Dorsolateral prefrontal cortex (tissue), 120 donors: ENCODE measurements at regions of chr19 and their contacts with region 1.

Region 1: DNA sequence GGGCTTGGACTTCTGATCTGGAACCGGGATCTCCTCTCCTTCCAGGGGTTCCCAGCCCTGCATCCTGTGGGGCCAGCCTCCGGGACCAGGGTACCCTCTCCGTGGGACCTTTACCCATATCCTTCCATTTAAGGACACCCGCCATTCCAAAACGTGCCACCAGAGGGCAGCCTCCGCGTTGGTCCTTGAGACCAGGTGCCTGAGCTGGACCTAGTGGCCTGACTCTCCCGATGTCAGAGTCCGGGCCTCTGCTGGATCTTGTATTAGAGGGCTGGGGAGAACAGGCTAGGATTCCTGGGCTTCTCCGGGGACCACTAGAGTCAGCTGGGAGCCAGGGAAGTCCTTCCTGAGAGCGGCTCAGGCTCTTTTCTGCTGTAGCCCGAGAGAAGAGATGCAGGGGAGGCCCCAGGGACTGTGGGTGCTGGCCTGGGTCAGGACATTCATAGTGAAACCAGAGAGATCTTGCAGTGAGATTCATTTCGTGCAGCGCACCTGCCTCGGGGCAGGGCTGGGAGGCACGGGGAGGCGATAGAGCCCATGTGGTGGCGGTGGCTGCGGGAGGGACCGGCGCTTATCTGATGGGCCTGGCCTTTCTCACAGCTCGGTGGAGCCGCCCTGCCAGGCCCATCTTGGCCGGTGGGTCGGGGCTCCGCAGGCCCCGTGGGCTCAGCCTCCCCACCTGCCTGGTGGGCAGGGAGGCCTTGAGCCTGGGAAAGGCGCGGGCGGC is 9.8 kb upstream of the SLC7A10 start:
- DNase-seq: peak; percentile 65 to 86 (median 79)
- H3K4me3 ChIP-seq: no peak overlapping the region
- H3K27ac ChIP-seq: no peak overlapping the region
- H3K27me3 ChIP-seq: peaks cover 0 to 6% (median 0%) of the 10 kb centered on the region in 45 donors
- CTCF ChIP-seq: peak; percentile 48 to 97 (median 84)

Region 2: DNA sequence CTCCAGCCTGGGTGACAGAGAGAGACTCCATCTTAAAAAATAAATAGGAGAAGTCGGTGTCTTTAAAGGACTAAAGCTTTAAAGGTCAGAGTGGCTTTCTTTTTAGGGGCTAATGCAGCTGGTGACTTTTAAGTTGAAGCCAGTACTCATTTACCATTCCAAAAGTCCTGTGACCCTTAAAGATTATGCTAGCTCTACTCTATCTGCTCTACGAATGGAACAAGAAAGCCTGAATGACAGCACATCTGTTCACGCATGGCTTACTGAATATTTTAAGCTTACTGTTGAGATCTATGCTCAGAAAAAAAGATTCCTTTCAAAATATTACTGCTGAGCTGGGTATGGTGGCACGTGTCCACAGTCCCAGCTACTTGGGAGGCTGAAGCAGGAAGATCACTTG is 499.5 kb before region 1 on chr19:
- intact Hi-C with region 1: no loop called
- DNase-seq: no peak
- H3K4me3 ChIP-seq: no peak overlapping the region
- H3K27ac ChIP-seq: no peak overlapping the region
- H3K27me3 ChIP-seq: no peaks in the 10 kb centered on the region
- CTCF ChIP-seq: no peak

Region 3: GRCh38 chr19:33143897-33144405 is 91.5 kb before region 1 on chr19:
- intact Hi-C with region 1: loop called in 1 of 2 experiments (anchors 10 kb)
- DNase-seq: peak; percentile 34 to 75 (median 54)
- H3K4me3 ChIP-seq: peak overlapping the region in 20 of 59 donors; percentile 4 to 53 (median 20)
- H3K27ac ChIP-seq: no peak overlapping the region
- H3K27me3 ChIP-seq: peaks cover 0 to 2% (median 0%) of the 10 kb centered on the region in 45 donors
- CTCF ChIP-seq: peak; percentile 71 to 96 (median 92)

Region 4: GRCh38 chr19:33311326-33311682 is 75.9 kb after region 1 on chr19:
- intact Hi-C with region 1: no loop called
- DNase-seq: no peak
- H3K4me3 ChIP-seq: no peak overlapping the region
- H3K27ac ChIP-seq: no peak overlapping the region
- H3K27me3 ChIP-seq: no peaks in the 10 kb centered on the region
- CTCF ChIP-seq: no peak